BJ (cell line): ENCODE measurements at regions of chr9 and their contacts with region 1.

Region 1: DNA sequence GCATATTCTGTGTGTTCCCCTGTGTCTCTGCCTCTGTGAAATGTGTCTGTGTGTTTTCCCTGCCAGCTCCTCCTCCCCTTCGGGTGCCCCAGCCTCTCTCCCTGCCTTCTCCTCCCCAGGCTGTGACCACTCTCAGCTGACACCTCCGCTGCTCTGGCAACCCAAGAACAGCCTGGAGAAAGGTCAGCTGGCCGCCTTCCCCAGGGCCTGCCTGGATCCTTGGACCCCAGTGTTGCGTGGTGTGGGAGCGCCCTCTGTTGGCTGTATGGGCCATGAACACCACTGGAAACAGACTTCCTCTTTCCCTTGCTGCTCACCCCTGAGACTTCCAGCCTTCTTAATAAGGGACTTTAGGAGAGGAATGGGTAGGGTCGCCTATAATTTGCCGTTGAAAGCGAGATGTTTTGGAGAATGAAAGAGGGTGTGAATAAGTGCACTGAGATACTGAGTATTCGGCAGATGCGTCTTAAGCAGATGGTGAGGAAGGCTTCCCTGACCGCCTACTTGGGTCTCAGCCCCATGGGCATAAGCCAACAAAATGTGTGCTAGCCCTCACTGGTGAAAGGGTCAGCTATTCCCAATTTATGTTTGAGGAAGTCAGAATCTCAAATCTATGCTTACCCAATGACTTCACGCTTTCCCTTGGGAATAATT is 114.9 kb upstream of the TRIM32 start:
- DNase-seq: no peak
- H3K4me3 ChIP-seq: no peak overlapping the region
- H3K27me3 ChIP-seq: no peaks in the 10 kb centered on the region
- CTCF ChIP-seq: peak; percentile 97

Region 2: GRCh38 chr9:116499986-116500871 is 72.0 kb before region 1 on chr9:
- CTCF ChIA-PET with region 1: interaction called, 16 read pairs
- POLR2A ChIA-PET with region 1: no interaction called
- DNase-seq: peak; percentile 31
- H3K4me3 ChIP-seq: no peak overlapping the region
- H3K27me3 ChIP-seq: no peaks in the 10 kb centered on the region
- CTCF ChIP-seq: no peak